Activated T-helper 1 cell treated with anti-CD3 and anti-CD28 coated beads, Interleukin-12 subunit alpha, Interleukin-12 subunit beta, Interleukin-2, Interleukin-4 antibody, amounts not matched to agents 30 ng/mL and 10 ng/mL and 1 ng/mL, durations not matched to agents 14 hours and 24 hours and 36 hours (primary cell): ENCODE measurements at regions of chr22 and their contacts with region 1.

Region 1: DNA sequence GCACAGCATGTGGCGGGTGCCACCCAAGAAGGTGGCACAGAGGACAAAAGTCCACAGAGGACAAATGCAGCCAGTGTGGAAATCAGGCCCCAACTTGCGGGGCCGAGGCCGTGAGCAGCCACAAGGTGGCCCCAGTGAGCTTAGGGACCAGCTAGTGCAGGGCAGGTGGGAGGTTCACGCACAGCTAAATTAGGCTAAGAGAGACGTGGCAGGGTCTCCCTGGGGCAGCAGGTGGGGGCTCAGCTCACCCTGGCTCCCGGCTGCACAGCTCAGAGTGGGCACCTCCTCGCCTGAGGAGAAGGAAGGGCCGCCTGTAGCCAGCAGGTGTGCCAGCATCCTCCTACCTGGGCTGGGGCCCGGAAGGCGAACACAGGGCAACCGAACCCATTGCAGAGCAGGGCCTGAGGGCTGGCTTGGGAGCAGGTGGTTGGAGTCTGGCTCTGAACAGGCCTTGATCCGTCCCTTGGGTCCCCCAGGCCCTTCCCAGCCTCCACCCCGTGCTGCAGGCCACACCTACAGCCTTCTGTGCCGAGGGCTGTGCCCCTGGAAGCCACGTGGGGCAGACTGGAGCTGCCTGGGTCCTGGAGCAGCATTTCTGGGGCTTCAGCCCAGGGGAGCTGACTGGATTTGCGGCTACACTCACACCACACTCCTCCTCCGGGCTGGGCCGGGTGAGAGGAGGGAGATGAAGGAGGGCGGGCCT is 26.1 kb upstream of the CELSR1 start:
- DNase-seq: peak; percentile 68
- H3K4me3 Mint-ChIP-seq: no peak overlapping the region
- H3K27ac Mint-ChIP-seq: no peak overlapping the region
- H3K4me1 Mint-ChIP-seq: peaks cover 8% of the 10 kb centered on the region
- H3K27me3 Mint-ChIP-seq: no peaks in the 10 kb centered on the region

Region 2: GRCh38 chr22:45867118-45867905 is 696.2 kb before region 1 on chr22:
- intact Hi-C with region 1: no loop called
- DNase-seq: no peak
- H3K4me3 Mint-ChIP-seq: no peak overlapping the region
- H3K27ac Mint-ChIP-seq: no peak overlapping the region
- H3K4me1 Mint-ChIP-seq: peaks cover 8% of the 10 kb centered on the region
- H3K27me3 Mint-ChIP-seq: peaks cover 29% of the 10 kb centered on the region

Region 3: GRCh38 chr22:46576556-46577367 is 13.2 kb after region 1 on chr22:
- intact Hi-C with region 1: no loop called
- DNase-seq: peak; percentile 58
- H3K4me3 Mint-ChIP-seq: peak overlapping the region; percentile 77
- H3K27ac Mint-ChIP-seq: no peak overlapping the region
- H3K4me1 Mint-ChIP-seq: peaks cover 38% of the 10 kb centered on the region
- H3K27me3 Mint-ChIP-seq: no peaks in the 10 kb centered on the region

Region 4: DNA sequence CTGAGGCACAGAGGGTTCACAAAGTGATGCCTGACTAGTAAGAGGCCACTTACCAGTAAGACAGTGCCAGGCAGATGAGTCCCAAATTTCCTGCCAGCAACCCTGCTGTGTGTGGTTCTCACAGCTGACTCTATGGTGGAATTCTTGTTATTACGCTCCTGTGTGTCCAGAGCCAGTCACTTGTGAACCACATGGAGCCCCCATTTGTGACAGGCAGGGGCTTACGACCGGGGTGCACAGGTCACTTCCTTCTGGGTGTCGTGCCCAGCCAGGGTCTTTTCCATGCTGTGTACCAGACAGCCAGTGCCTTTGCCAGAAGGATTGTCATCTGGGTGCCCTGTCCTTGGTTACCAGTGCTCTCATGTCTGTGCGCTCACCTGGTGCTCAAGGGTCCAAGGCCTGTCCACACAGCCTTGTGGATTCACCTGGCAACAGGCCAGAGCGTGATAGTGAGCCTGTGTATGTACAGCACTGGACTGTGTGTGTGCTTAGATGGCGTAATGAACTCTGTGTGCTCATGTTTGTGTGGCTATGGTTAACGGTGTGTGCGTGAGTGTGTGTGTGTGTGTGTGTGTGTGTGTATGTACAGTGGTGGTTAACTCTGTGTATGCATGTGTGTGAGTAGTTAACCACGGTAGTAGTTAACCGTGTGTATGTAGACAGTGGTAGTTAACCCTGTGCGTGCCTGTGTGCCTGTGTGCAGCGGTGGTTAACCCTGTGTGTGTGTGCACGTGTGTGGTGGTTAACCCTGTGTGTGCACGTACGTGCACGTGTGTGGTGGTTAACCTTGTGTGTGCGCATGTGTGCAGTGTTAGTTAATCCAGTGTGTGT is 75.3 kb after region 1 on chr22:
- intact Hi-C with region 1: no loop called
- DNase-seq: no peak
- H3K4me3 Mint-ChIP-seq: no peak overlapping the region
- H3K27ac Mint-ChIP-seq: no peak overlapping the region
- H3K4me1 Mint-ChIP-seq: peaks cover 11% of the 10 kb centered on the region
- H3K27me3 Mint-ChIP-seq: no peaks in the 10 kb centered on the region

Region 5: GRCh38 chr22:46798366-46799350 is 235.1 kb after region 1 on chr22:
- intact Hi-C with region 1: loop called (anchors 5 kb)
- DNase-seq: peak; percentile 65
- H3K4me3 Mint-ChIP-seq: no peak overlapping the region
- H3K27ac Mint-ChIP-seq: peak overlapping the region; percentile 82
- H3K4me1 Mint-ChIP-seq: peaks cover 21% of the 10 kb centered on the region
- H3K27me3 Mint-ChIP-seq: no peaks in the 10 kb centered on the region